BJ (cell line): ENCODE measurements at regions of chr17 and their contacts with region 1.

Region 1: DNA sequence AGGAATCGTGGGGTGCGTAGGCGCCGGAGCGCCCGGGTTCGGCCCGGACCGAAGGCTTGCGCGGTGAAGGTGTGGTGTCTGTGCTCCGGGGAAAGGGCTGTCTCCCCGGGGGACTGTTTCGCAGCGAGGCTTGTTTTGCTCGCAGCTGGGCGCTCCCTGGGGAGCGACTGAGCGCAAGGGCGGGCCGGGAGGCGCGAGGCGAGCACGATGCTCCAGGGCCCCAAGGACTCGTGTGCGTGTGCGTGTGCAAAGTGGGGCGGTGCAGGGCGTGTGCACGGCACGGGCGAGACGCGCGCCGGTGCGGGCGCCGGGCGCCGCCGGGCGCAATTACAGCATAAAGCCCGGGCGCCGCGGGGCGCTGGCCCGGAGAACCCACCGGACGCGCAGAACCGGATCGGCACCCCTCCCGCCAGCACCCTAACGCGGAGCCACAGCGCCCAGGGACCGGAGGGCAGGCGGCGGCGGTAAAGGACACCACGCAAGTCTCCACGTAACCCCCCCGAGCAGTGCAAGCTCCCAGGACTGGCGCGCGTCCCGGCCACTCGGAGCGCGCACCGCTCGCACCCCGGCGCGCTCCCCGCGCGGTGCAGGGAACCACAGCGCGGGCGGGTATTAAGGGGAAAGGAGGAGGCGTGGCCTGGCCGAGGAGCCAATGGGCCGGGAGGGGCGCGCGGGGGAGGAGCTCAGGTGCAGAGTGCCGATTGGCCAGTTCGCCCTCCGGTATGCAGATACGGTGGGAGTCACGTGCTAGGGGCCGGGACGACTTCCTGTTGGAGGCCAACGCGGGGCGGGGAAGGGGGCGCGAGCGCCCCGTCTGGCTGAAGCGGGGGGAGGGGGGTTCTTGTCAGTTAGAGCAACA is at the start of gene TNRC6C:
- DNase-seq: peak; percentile 93
- H3K4me3 ChIP-seq: peak within 1 kb of the TSS; percentile 69
- H3K27me3 ChIP-seq: peaks cover 6% of the 10 kb centered on the region
- CTCF ChIP-seq: peak; percentile 38
- polyA plus RNA-seq, gene TNRC6C: 0.91 and 1.7 TPM in 2 replicates

Region 2: DNA sequence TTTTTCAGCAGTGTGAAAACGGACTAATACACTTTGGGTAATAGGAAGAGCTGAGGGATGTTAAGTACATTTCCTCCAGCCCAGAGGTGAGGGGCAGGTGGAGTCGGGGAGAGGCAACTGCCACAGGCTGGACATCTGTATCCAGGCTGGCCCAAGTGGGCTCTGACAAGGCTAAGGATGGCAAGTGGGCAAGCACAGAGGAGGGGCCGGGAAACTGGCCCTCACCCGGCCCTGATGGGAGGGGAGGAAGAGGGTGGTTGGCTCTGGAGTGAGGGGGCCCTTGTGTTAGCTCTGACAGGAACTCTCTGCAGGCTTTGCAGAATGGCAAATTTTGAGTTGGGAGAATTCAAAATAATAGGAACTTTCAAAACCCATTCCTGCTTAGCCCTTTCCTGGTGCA is 250.5 kb before region 1 on chr17:
- CTCF ChIA-PET with region 1: no interaction called
- POLR2A ChIA-PET with region 1: interaction called, 18 read pairs
- DNase-seq: no peak
- H3K4me3 ChIP-seq: no peak overlapping the region
- H3K27me3 ChIP-seq: peaks cover 2% of the 10 kb centered on the region; the same call in 1 of the 2 replicates
- CTCF ChIP-seq: no peak

Region 3: DNA sequence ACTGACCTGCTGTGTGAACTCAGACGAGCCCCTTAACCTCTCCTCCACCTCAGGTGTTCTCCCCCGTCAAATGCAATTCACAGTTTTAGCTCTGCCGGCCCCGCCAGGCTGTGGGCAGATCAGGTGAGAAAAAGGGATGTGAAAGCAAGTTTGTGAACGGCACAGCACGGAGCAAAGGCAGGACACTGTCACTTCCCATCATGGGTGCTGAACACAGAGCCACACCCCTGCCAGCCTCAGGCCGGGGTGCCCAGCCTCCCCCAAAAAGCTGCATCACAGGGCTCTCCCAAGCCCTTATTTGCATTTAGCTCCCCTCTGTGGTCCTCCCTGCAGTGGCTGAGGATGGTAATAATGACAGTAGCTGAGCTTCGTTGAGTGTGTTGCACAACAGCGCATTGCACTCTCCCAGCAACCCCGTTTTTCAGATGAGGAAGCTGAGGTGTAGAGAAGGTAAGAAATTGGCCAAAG is 88.4 kb before region 1 on chr17:
- CTCF ChIA-PET with region 1: no interaction called
- POLR2A ChIA-PET with region 1: no interaction called
- DNase-seq: no peak
- H3K4me3 ChIP-seq: no peak overlapping the region
- H3K27me3 ChIP-seq: peaks cover 14% of the 10 kb centered on the region
- CTCF ChIP-seq: no peak

Region 4: DNA sequence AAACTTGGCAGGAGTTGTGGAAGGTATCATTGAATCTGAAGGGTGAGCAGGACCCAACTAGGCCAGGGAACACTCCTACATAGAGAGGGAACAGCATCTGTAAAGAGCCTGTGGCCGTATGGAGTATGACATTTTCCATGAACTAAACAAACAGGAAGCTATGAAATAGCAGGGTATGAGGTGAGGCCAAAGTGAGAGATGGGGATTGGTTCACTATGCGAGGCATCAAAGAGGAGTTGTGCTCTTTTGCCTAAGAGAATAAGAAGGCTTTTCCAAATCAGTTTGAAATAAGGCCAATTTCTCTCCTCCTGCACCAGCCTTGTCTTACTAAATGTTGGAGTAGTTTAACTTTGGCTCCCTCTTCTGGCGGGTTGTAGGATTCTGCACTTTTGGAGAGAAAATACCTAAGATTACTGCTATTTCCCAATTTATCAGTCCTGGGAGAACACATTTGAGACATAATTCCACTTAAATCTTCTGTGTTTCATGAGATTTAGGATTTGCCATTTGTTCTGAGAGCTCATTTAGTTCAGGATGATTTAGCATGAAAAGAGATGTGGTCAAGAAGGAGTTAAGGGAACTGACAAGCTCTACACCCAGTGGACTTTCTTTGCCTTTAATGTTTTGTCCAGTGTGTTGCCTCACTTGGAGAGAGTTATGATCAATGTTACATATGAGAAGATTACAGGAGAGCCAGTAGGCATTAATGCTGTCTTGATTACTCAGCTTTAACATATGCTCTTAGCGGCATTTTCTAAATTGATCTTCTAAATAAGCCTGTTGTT is 55.8 kb after region 1 on chr17:
- CTCF ChIA-PET with region 1: interaction called, 6 read pairs
- POLR2A ChIA-PET with region 1: interaction called, 19 read pairs
- DNase-seq: no peak
- H3K4me3 ChIP-seq: no peak overlapping the region
- H3K27me3 ChIP-seq: no peaks in the 10 kb centered on the region
- CTCF ChIP-seq: peak; percentile 81

Region 5: DNA sequence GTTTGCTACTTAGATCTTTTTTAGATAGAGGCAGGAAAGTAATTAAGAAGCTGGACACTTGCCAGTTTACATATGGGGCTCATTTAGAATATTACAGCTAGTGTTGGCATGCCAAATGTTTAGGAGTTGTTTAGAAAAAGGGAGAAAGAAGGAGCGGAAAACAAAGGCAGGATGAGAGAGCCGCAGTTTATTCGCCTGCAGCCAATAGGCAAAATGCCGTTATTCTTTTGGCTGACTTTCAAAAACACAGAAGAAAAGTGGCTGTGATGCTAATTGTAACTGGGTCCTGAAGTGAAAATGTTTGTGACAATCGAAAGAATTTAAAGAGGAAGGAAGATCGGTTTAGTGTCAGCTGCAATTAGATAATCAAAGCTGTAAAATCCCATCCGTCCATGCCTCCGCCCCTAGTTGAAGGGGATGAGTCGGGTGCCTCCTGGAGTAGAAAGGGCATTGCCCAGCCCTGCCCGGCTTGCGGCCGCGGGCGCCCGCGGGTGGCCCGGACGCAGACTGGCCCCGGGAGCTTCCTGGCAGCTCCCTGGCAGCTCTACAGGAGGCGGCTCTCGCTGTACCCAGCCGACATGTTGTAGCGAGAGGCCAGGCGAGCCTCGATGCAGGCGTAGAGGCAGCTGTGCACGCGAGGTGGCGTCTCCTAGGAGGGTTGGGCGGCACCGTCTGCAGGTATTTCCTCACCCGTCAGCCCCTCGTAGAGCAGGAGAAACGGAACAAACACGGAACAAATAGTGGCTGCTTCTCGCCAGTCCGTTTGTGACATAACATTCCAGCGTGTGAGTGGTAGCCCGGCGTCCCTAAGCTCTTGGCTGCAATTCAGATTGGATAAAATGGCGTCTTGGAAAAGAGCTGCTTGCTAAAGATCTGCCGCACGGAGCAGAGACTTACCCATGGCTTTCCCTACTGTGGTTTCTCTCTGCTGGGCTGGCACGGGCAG is 82.6 kb after region 1 on chr17:
- CTCF ChIA-PET with region 1: no interaction called
- POLR2A ChIA-PET with region 1: no interaction called
- DNase-seq: no peak
- H3K4me3 ChIP-seq: peak overlapping the region; percentile 54
- H3K27me3 ChIP-seq: no peaks in the 10 kb centered on the region
- CTCF ChIP-seq: peak; percentile 35

Region 6: DNA sequence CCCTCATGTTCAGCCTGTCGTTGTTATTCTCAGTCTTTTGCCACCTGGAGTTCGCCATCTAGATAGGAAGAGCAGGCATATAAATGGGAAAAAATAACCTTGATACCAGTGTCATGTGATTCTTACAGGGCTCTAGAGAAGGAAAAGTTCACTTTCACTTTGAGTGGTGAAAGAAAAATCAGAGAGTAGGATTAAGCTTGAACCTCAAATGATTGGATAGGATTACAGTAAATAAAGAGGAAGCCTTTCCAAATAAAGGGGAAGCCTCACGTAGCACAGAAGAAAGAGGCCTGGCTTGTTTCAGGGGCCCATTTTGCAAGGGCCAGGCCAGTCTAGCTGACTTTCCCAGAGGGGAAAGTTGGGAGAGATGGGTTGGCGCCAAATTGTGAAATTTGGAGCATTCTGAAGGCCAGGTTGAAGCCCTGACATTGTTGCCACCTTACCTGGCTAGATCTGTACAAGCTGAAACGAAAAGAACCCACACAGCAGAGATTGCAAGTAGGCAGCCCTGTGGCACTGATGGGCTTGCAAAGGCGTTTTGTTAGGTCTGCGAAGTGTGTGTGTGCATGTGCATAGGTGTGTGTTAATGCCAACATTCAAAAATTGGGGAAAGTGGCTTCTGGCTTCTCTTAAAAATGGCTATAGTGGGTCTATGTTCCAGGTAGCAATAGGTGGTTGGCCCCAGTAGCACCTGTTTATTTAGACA is 131.6 kb after region 1 on chr17:
- CTCF ChIA-PET with region 1: no interaction called
- POLR2A ChIA-PET with region 1: no interaction called
- DNase-seq: no peak
- H3K4me3 ChIP-seq: no peak overlapping the region
- H3K27me3 ChIP-seq: no peaks in the 10 kb centered on the region
- CTCF ChIP-seq: no peak

Region 7: GRCh38 chr17:78186692-78187595 is 228.9 kb after region 1 on chr17 and contains the starts of genes AFMID and TK1:
- CTCF ChIA-PET with region 1: no interaction called
- POLR2A ChIA-PET with region 1: interaction called, 21 read pairs
- DNase-seq: peak; percentile 78
- H3K4me3 ChIP-seq: peak within 1 kb of the TSS; percentile 63
- H3K27me3 ChIP-seq: no peaks in the 10 kb centered on the region
- CTCF ChIP-seq: peak; percentile 91
- polyA plus RNA-seq, gene AFMID: 28.0 and 32.1 TPM in 2 replicates
- polyA plus RNA-seq, gene TK1: 62.5 and 130 TPM in 2 replicates